WTC11 (cell line): ENCODE measurements at regions of chr2 and their contacts with region 1.

Region 1: DNA sequence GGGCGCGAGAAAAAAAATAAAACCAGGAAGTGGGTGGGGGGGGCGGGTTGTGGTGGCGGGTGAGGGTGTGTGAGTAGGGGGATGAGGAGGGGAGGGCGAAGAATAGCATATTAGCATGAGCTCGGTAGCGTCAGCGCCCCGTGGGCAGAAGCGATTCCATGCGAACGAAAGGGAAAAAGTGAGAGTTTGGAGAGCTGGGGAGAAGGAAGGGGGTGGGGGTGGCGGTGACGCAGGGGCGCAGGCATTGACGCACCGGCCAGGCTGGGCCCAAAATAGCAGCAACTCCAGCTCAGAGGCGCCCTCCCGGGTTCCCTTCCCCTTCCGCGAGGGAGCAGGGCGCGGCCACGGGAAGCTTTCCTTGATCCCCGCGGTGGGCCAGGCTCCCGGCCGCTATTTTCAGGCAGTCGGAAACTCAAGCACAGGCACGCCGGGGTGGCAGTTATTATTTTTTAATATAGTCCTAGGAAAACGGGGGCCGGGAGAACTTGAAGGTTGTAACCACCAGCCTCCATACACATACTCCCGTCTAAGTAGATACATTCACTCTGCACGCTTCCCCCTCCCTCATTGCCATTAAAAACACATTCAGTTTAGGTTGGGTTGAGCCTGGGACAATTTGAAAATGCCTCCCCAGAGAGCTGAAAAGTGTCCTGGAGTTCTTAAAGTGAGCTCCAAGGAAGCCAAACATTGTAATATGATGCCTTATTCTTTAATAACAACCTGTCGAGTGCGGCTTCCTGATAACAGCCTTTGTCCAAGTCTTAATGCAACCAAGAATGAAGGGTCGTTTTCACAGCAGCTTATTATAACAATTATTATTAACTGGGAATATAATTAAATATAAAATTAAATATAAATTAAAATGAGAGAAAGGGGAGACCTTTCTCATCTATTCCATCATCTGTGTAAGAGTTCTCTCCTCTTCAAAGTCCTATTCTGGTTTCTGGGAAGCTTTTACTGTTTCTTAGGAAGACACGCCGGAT is 2.3 kb upstream of the NR4A2 start:
- DNase-seq: peak; percentile 70
- ATAC-seq: peak; percentile 12
- H3K4me3 Mint-ChIP-seq: peak overlapping the region; percentile 81
- H3K27ac Mint-ChIP-seq: no peak overlapping the region
- H3K4me1 Mint-ChIP-seq: peaks cover 55% of the 10 kb centered on the region
- H3K27me3 Mint-ChIP-seq: peaks cover 52% of the 10 kb centered on the region
- CTCF ChIP-seq: no peak

Region 2: DNA sequence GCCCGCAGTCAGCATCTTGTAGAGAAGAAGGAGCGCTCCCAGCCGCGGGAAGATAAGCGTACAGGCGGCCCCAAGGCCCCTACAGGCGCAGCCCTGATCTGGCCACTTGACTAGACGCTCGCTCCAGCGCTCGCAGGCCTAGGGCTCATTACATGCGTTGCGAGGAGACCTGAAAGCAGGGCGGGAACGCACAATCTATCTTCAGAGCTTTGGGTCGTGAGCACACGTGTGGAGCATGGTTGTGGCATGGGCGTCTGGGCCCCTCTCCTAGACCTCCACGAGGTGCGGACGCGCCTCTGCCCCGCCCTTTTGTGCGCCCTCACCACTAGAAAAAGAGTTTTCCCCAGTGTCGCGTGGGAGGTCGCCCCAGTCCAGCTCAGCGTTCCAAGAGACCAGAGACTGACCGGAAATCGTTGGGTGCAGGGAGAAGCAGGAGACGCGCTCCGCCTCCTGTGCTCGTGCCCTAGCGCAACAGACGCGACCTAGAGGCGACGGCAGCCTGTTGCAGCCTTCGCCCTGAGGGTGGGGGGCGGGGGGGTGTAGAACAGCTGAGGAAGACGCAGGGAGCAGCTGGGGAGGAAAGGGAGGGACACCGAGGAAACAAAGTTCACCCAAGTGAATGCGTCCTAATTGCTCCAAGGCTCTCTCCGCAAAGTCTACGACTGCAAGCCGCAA is 14.8 kb before region 1 on chr2:
- CTCF ChIA-PET with region 1: interaction called, 10 read pairs
- POLR2A ChIA-PET with region 1: interaction called, 3 read pairs
- DNase-seq: peak; percentile 76
- ATAC-seq: peak; percentile 75
- H3K4me3 Mint-ChIP-seq: peak overlapping the region; percentile 62
- H3K27ac Mint-ChIP-seq: peak overlapping the region; percentile 58; the same call in 1 of the 2 replicates
- H3K4me1 Mint-ChIP-seq: peaks cover 34% of the 10 kb centered on the region
- H3K27me3 Mint-ChIP-seq: peaks cover 90% of the 10 kb centered on the region
- CTCF ChIP-seq: no peak

Region 3: DNA sequence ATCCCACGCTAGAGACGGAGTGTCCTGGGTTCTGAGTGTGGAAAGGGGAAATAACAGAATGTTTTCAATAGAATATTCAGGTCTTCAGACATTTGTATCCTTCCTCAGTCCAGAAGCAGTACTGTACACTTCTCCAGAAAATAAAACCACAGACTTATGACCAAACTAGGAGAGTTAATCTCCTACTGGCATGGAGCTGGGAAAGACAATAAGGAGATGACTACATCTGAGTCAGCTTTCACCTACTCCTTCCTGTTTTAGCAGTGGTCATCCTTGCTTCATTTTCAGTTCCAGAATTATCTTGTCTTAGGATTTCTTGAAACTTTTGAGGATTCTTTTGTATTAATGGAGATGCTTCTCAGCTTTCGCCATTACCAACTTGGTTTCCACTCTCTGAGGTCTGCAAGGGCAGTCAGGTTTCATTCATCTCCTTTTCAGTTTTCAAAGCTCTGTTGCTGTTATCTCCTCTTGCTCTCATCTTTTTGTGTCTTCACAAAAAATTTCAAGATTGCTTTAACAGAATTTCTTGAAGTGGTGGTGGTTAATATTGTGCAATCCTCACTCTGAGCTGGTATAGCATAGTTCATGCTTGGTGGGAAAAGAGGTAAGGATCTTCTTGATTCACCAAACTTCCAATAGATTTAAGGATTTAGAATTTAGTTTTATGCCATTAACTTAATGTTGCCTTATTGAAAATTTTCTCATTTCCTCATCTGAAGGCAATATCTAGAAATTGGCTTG is 21.4 kb after region 1 on chr2:
- CTCF ChIA-PET with region 1: no interaction called
- POLR2A ChIA-PET with region 1: no interaction called
- DNase-seq: no peak
- ATAC-seq: no peak
- H3K4me3 Mint-ChIP-seq: no peak overlapping the region
- H3K27ac Mint-ChIP-seq: no peak overlapping the region
- H3K4me1 Mint-ChIP-seq: no peaks in the 10 kb centered on the region
- H3K27me3 Mint-ChIP-seq: no peaks in the 10 kb centered on the region
- CTCF ChIP-seq: no peak

Region 4: GRCh38 chr2:156366753-156367152 is 32.0 kb after region 1 on chr2:
- CTCF ChIA-PET with region 1: no interaction called
- POLR2A ChIA-PET with region 1: no interaction called
- DNase-seq: no peak
- ATAC-seq: no peak
- H3K4me3 Mint-ChIP-seq: no peak overlapping the region
- H3K27ac Mint-ChIP-seq: no peak overlapping the region
- H3K4me1 Mint-ChIP-seq: peaks cover 7% of the 10 kb centered on the region
- H3K27me3 Mint-ChIP-seq: no peaks in the 10 kb centered on the region; the same call in 1 of the 2 replicates
- CTCF ChIP-seq: no peak

Region 5: GRCh38 chr2:156589381-156590079 is 254.7 kb after region 1 on chr2:
- CTCF ChIA-PET with region 1: interaction called, 26 read pairs
- POLR2A ChIA-PET with region 1: interaction called, 3 read pairs
- DNase-seq: no peak
- ATAC-seq: peak; percentile 50
- H3K4me3 Mint-ChIP-seq: no peak overlapping the region
- H3K27ac Mint-ChIP-seq: peak overlapping the region; percentile 48; the same call in 1 of the 2 replicates
- H3K4me1 Mint-ChIP-seq: peaks cover 56% of the 10 kb centered on the region
- H3K27me3 Mint-ChIP-seq: no peaks in the 10 kb centered on the region
- CTCF ChIP-seq: no peak; the same call in 1 of the 2 replicates